Adrenal gland (tissue), 19 donors: ENCODE measurements at regions of chr17 and their contacts with region 1.

Region 1: DNA sequence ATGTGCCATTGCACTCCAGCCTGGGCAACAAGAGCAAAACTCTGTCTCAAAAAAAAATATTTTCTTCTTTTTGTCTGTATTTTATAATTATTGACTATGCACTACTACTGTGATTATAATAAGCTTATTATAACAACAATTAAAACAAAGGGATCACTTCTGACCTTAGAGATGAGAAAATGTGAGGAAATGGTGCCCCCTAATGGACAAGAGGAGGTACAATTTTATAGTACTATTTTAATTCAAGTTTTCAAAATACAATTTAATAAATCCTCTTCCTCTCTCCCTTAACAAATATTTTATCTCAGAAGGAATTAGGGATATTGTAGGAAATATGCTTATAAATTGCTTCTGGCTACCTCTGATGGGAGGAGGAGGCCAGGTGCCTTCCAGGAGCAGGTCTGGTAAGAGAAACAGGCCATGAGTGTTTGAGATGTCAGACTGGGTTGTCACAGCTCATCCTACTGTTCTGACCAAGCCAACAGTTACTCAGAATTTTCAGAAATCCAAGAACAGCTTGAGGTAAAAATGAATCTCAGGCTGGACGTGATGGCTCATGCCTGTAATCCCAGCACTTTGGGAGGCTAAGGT is 14.0 kb downstream of the VPS53 start:
- DNase-seq: peak in 1 of 7 donors; percentile 7
- H3K4me3 ChIP-seq: no peak overlapping the region
- H3K27ac ChIP-seq: no peak overlapping the region
- H3K4me1 ChIP-seq: peaks cover 0 to 18% of the 10 kb centered on the region in 2 donors
- H3K27me3 ChIP-seq: no peaks in the 10 kb centered on the region
- CTCF ChIP-seq: peak; percentile 64 to 85 (median 71)
- POLR2A ChIP-seq: no peak

Region 2: GRCh38 chr17:143782-144281 is 556.8 kb before region 1 on chr17:
- intact Hi-C with region 1: loop called in 1 of 2 experiments (anchors 5 kb)
- DNase-seq: peak; percentile 74 to 89 (median 81)
- H3K4me3 ChIP-seq: no peak overlapping the region
- H3K27ac ChIP-seq: no peak overlapping the region
- H3K4me1 ChIP-seq: no peaks in the 10 kb centered on the region
- H3K27me3 ChIP-seq: no peaks in the 10 kb centered on the region
- CTCF ChIP-seq: peak; percentile 66 to 98 (median 90)
- POLR2A ChIP-seq: no peak

Region 3: GRCh38 chr17:409848-410545 is 290.6 kb before region 1 on chr17:
- intact Hi-C with region 1: loop called (anchors 2 to 5 kb)
- DNase-seq: peak; percentile 98 to 100 (median 100)
- H3K4me3 ChIP-seq: peak overlapping the region; percentile 55 to 79 (median 76)
- H3K27ac ChIP-seq: peak overlapping the region in 4 of 5 donors; percentile 15 to 81 (median 76)
- H3K4me1 ChIP-seq: peaks cover 24 to 26% of the 10 kb centered on the region in 2 donors
- H3K27me3 ChIP-seq: no peaks in the 10 kb centered on the region
- CTCF ChIP-seq: no peak
- POLR2A ChIP-seq: peak in 1 of 2 donors; percentile 69

Region 4: DNA sequence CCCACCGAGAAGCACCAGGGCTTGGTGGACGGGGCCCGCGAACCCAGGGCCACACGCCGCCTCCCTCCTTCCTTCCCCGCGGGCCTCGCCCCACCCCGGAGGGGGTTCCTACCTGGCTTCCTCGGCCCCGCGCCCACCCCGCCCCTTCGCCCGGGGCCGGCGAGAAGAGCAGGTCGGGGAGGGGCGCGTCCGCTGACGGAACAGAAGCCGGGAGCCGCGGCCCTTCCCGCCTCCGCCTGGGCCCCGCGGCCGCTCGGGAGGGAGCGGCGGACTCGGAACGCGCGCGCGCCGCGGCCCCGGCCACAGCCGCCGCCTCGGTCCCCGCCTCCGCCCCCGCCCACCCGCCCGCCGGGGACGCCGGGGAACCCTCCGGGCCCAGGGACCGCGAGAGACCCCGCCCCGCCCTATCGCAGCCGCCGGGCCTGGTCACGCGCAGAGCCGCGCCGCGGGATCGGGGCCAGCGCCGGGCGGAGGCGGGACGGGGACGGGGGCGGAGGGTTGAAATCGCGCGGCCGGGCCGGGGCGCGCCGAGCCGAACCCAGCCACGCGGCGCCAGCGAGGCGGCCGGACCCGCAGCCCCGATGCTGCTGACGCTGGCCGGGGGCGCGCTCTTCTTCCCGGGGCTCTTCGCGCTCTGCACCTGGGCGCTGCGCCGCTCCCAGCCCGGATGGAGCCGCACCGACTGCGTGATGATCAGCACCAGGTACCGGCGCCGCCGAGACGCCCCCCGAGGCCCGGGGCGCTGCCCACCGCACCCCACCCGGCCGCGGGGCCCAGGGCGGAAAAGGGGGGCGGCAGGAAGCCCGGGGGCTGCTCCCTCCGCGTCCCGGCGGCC is 31.7 kb after region 1 on chr17 and contains the start of gene TLCD3A:
- intact Hi-C with region 1: no loop called
- DNase-seq: peak; percentile 55 to 77 (median 68)
- H3K4me3 ChIP-seq: peak within 1 kb of the TSS in 2 of 4 donors; percentile 67 to 98
- H3K27ac ChIP-seq: peak within 1 kb of the TSS in 3 of 5 donors; percentile 39 to 71 (median 67)
- H3K4me1 ChIP-seq: no peaks in the 10 kb centered on the region
- H3K27me3 ChIP-seq: no peaks in the 10 kb centered on the region
- CTCF ChIP-seq: no peak
- POLR2A ChIP-seq: no peak
- total RNA-seq, gene TLCD3A: 0.72 to 8.7 (median 4.9) TPM